BJ (cell line): ENCODE measurements at regions of chr1 and their contacts with region 1.

Region 1: GRCh38 chr1:84944767-84945486 is 51.9 kb upstream of the LPAR3 start:
- DNase-seq: peak; percentile 51
- H3K4me3 ChIP-seq: peak overlapping the region; percentile 30
- H3K27me3 ChIP-seq: no peaks in the 10 kb centered on the region; the same call in 1 of the 2 replicates
- CTCF ChIP-seq: peak; percentile 88

Region 2: DNA sequence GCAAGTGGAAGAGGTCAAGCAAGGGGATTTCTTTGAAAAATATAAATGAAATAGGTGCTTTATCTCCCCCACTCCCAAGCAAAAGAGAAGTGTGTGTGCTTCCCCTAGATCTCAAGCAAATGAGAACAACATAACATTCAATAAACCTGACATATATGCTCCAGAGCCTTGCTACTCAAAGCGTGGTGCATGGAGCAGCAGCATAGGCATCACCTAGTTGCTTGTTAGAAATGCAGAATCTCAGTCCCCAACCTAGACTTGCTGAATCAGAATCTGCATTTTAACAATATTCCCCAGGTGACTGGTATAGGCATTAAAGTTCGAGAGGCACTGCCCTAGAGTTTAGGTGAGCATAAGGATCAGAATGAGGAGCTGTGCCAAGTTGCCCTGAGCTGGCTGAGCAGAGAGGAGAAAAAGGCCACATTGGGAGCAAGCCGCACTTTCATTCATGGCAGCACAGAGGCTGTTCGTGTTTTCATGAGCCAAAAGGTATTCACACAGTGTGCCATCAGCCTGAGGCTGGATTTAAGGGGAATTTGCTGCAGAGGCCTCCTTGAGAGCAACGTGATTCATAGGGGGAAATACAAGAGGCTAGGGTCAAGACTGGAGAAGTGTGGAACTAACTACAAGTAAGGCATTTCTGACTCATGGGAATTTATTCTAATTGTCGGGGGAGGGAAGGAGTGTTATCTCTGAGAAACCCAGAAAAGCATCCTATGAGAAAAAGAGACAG is 37.7 kb before region 1 on chr1:
- CTCF ChIA-PET with region 1: no interaction called
- POLR2A ChIA-PET with region 1: no interaction called
- DNase-seq: no peak
- H3K4me3 ChIP-seq: no peak overlapping the region
- H3K27me3 ChIP-seq: peaks cover 3% of the 10 kb centered on the region
- CTCF ChIP-seq: no peak

Region 3: DNA sequence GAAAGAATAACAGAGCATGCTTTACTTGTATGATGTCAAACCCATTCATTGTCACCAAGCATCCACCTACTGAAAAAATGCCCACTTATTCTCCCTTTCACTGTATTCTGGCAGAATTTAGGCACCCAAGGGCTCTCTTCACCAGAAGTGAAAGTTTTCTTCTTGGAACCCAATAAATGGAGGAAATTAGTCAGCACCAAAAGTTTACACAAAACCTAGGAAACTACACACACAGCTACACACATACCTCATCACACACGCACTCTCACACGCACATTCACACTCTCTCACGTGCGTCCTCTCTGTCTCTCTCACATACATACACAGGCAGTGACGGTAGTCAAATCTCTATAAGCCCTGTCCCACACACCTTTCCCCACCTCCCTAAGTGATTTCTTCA is 14.4 kb after region 1 on chr1:
- CTCF ChIA-PET with region 1: interaction called, 52 read pairs
- POLR2A ChIA-PET with region 1: no interaction called
- DNase-seq: no peak
- H3K4me3 ChIP-seq: no peak overlapping the region
- H3K27me3 ChIP-seq: no peaks in the 10 kb centered on the region; the same call in 1 of the 2 replicates
- CTCF ChIP-seq: no peak

Region 4: DNA sequence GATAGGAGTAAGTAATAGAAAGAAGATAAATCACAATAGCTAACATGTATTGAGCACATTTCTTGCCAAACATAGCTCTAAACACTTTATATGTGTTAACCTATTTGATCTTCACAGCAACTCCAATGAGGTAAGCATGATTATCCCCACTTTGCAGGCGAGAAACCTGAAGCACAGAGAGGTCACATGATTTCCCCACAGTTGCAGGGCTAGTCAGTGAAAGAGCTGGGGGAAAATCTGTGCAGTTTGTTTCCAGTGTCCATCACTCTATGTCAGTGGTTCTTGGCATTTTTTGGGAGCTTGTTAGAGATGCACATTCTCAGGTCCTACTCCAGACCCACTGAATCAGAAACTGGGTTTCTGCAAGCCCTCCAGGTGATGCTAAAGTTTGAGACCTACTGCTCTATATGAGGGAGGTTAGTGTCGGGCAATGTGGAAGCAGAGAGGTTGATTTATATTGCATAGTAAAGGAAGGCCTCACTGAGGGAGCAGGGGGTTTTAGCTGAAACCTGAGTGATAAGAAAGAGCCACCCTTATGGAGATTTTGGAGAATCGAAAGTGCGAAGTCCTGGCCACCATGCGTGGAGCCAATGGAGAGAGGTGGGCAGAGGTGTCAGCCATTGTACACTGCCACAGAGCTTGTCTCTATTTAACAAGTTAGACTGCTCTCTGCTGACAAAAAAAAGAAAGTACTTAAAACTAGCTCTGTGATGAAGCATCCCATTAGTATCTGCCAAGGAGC is 82.5 kb after region 1 on chr1:
- CTCF ChIA-PET with region 1: interaction called, 100 read pairs
- POLR2A ChIA-PET with region 1: interaction called, 4 read pairs
- DNase-seq: no peak
- H3K4me3 ChIP-seq: no peak overlapping the region
- H3K27me3 ChIP-seq: no peaks in the 10 kb centered on the region; the same call in 1 of the 2 replicates
- CTCF ChIP-seq: 0 out of 2 replicates have a peak, but pooled peaks have one; percentile 11

Region 5: DNA sequence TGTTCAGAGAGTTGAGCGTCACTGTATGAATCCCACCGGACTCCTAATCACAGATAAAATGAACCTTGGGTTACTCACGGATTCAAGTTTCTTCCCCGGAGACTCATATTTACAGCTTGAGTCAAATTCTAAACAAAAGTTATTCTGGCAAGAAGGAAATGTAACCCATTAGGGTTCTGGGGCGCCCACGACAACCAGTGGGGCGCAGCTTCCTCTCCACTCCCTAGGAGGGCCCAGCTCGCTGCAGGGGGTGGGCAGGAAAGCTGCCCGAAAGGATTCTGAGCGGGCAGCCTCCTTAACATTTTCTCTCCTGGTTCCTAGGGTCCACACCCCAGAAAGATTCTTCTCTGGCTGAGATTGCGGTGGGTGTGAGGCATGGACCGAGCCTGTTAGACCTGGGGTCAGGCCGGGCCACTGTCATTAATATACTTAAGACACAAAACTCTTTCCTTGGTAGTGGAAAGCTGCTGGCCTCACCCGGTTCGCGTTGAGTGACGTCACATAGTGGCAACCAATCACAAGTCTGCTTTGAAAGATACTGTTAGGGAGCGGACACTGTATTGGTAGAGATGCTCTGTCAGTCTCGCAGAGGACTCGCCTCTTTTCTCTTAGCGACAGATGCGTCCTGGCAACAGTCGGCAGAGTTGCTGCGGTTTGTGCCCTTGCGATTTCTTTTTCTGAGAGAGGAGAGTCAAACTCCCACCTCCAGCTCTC is 116.9 kb after region 1 on chr1:
- CTCF ChIA-PET with region 1: interaction called, 10 read pairs
- POLR2A ChIA-PET with region 1: no interaction called
- DNase-seq: peak; percentile 87
- H3K4me3 ChIP-seq: peak overlapping the region; percentile 40
- H3K27me3 ChIP-seq: no peaks in the 10 kb centered on the region
- CTCF ChIP-seq: no peak

Region 6: DNA sequence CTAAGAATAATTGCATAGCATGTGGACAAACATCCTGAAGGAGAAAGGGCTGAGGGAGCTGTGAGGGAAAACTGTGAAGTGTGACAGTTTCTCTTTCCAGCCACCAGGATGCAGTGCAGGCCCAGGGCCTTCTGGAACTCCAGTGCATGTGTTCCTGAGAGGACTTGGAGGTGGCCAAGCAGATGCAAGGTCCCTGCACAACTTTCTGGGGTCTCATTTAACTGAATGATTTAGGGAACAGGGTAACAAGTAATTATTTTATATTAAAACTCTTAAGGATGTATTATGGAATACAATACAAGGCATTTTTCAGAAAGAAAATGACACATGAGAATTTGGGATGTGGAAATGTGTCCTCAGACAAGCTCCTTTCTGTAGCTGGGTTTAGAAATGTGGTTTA is 164.5 kb after region 1 on chr1:
- CTCF ChIA-PET with region 1: interaction called, 12 read pairs
- POLR2A ChIA-PET with region 1: no interaction called
- DNase-seq: peak; percentile 15
- H3K4me3 ChIP-seq: no peak overlapping the region
- H3K27me3 ChIP-seq: no peaks in the 10 kb centered on the region
- CTCF ChIP-seq: peak; percentile 96